PC-3 (cell line): ENCODE measurements at regions of chr10 and their contacts with region 1.

Region 1: DNA sequence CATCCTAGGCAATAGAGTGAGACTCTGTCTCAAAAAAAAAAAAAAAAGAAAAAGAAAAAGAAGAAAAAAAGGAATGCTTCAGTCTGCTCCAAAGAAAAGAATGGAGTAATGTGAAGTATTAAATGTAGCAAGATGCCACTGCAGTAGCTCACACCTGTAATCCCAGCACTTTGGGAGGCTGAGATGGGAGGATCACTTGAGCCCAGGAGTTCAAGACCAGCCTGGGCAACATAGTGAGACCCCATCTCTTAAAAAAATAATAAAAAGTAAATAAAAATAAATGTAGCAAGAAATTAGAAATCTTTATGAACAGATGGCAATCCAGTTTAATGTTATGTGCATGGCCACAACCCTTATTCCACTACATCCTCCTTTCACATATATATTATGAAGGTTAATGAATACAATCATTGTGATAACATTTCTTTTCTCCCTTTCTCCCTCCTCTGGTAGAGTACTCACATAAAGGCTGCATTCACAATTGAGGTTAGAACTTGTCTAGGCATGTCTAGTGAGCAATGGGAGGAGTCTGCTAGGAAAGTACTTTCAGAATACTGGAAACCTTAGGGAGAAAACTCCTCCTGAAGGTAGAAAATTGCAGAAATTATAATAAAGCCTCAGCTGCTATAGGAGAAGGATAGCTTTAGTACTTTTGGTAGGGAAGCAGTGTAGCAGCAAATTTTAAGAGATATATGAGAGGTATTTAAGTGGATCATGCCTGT is 20.4 kb downstream of the KLLN start:
- DNase-seq: no peak
- ATAC-seq: no peak
- H3K4me3 ChIP-seq: no peak overlapping the region
- H3K27ac ChIP-seq: peak overlapping the region; percentile 98
- H3K4me1 ChIP-seq: peaks cover 51% of the 10 kb centered on the region
- H3K27me3 ChIP-seq: no peaks in the 10 kb centered on the region
- CTCF ChIP-seq: no peak

Region 2: GRCh38 chr10:87794285-87794684 is 48.7 kb before region 1 on chr10:
- CTCF ChIA-PET with region 1: no interaction called
- POLR2A ChIA-PET with region 1: no interaction called
- intact Hi-C with region 1: no loop called
- DNase-seq: no peak
- ATAC-seq: peak; percentile 31; the same call in 1 of the 2 replicates
- H3K4me3 ChIP-seq: no peak overlapping the region
- H3K27ac ChIP-seq: no peak overlapping the region
- H3K4me1 ChIP-seq: no peaks in the 10 kb centered on the region
- H3K27me3 ChIP-seq: no peaks in the 10 kb centered on the region
- CTCF ChIP-seq: no peak

Region 3: GRCh38 chr10:87817609-87818504 is 25.1 kb before region 1 on chr10 and contains the start of gene ATAD1:
- CTCF ChIA-PET with region 1: no interaction called
- POLR2A ChIA-PET with region 1: interaction called, 5 read pairs
- intact Hi-C with region 1: loop called (anchors 2 kb)
- DNase-seq: peak; percentile 86
- ATAC-seq: peak; percentile 90
- H3K4me3 ChIP-seq: peak within 1 kb of the TSS; percentile 98
- H3K27ac ChIP-seq: peak within 1 kb of the TSS; percentile 82
- H3K4me1 ChIP-seq: peaks cover 26% of the 10 kb centered on the region
- H3K27me3 ChIP-seq: no peaks in the 10 kb centered on the region
- CTCF ChIP-seq: 0 out of 2 replicates have a peak, but pooled peaks have one; percentile 21
- total RNA-seq, gene ATAD1: 14.9 and 15.7 TPM in 2 replicates